MCF 10A (cell line): ENCODE measurements at regions of chr5 and their contacts with region 1.

Region 1: DNA sequence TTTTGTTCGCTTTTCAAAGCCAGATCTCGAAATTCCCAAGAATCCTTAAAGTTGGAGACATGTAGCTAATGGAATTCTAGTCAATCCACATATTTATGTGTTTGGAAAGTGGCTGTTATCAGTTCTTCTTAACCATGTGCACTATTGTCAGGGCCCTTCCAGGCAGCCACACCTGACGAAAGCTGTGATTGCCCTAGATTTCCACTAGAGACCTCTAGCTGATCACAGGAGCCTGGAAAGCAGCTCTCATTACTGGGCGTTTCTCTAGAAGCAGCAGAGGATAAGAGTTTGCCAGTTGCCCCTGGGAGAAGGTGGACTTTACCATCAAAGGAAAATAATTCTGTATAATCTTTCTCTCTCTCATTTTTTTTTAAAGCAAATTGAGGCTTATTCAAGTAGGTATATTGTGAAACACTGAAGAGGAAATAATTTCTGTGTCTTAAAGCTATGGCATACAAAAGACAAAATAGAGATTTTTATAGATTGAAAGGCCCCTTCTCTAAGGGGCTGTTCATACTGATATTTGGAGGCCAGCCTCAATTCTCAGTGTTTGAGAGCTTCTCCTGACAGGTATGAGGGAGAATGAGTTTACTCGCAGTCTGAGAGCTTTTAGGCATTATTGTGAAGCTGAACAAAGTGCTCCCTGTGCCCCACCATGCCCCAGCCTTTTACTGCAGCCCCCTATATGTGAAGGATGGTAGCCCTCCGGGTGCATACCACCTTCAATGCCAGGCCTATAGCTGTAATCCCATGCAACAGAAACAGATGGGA is 405.4 kb upstream of the ACTBL2 start:
- DNase-seq: peak; percentile 76
- H3K4me3 Mint-ChIP-seq: no peak overlapping the region
- H3K27ac Mint-ChIP-seq: no peak overlapping the region
- H3K4me1 Mint-ChIP-seq: peaks cover 19% of the 10 kb centered on the region
- H3K27me3 Mint-ChIP-seq: no peaks in the 10 kb centered on the region
- CTCF ChIP-seq: peak; percentile 71

Region 2: DNA sequence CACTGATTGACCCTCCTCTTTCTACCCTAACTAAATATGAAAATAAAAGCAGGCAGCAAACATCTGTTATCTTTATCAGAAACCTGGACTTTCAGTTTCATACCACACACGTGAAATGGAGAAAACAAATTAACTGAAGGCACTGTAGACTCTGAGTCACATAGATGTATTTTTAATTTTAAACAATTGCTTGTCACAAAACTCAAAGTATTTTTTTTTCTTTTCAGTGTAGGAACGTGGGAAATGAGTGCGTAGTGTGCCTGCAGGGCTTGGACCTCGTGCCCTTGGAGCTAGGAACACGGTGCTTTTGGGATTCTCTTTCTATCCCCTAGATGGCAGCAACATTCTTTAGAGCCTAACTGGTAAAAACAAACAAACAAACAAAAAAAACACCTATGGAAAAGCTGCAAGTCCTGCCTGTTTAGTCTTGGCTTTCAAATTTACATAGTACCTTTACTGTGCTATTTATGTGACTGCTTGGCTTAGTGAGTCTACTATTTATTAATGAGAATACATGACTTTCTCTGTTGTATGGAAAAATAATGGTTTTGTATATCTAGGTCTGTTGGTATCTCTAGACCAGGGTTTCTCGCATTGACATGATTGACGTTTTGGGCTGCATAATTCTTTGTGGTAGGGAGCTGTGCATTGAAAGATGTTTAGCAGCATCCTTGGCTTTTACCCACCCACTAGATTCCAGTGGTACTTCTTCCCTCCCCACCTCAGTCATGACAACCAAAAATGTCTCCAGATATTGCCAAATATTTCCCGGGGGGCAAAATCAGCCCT is 388.6 kb before region 1 on chr5:
- CTCF ChIA-PET with region 1: interaction called, 24 read pairs
- POLR2A ChIA-PET with region 1: interaction called, 5 read pairs
- intact Hi-C with region 1: loop called (anchors 1 kb)
- DNase-seq: peak; percentile 69
- H3K4me3 Mint-ChIP-seq: peak overlapping the region; percentile 53
- H3K27ac Mint-ChIP-seq: no peak overlapping the region
- H3K4me1 Mint-ChIP-seq: peaks cover 21% of the 10 kb centered on the region
- H3K27me3 Mint-ChIP-seq: no peaks in the 10 kb centered on the region
- CTCF ChIP-seq: peak; percentile 63

Region 3: GRCh38 chr5:57841676-57842363 is 46.2 kb before region 1 on chr5:
- CTCF ChIA-PET with region 1: interaction called, 6 read pairs
- POLR2A ChIA-PET with region 1: interaction called, 5 read pairs
- intact Hi-C with region 1: loop called (anchors 1 kb)
- DNase-seq: peak; percentile 82
- H3K4me3 Mint-ChIP-seq: peak overlapping the region; percentile 51
- H3K27ac Mint-ChIP-seq: peak overlapping the region; percentile 47
- H3K4me1 Mint-ChIP-seq: peaks cover 61% of the 10 kb centered on the region
- H3K27me3 Mint-ChIP-seq: no peaks in the 10 kb centered on the region
- CTCF ChIP-seq: no peak

Region 4: GRCh38 chr5:57911438-57911837 is 23.4 kb after region 1 on chr5:
- CTCF ChIA-PET with region 1: no interaction called
- POLR2A ChIA-PET with region 1: no interaction called
- intact Hi-C with region 1: no loop called
- DNase-seq: no peak
- H3K4me3 Mint-ChIP-seq: no peak overlapping the region
- H3K27ac Mint-ChIP-seq: no peak overlapping the region
- H3K4me1 Mint-ChIP-seq: no peaks in the 10 kb centered on the region
- H3K27me3 Mint-ChIP-seq: no peaks in the 10 kb centered on the region
- CTCF ChIP-seq: no peak

Region 5: GRCh38 chr5:58019614-58020013 is 131.6 kb after region 1 on chr5:
- CTCF ChIA-PET with region 1: interaction called, 4 read pairs
- POLR2A ChIA-PET with region 1: interaction called, 5 read pairs
- intact Hi-C with region 1: loop called (anchors 10 kb)
- DNase-seq: no peak
- H3K4me3 Mint-ChIP-seq: no peak overlapping the region
- H3K27ac Mint-ChIP-seq: no peak overlapping the region
- H3K4me1 Mint-ChIP-seq: peaks cover 22% of the 10 kb centered on the region
- H3K27me3 Mint-ChIP-seq: no peaks in the 10 kb centered on the region
- CTCF ChIP-seq: no peak

Region 6: DNA sequence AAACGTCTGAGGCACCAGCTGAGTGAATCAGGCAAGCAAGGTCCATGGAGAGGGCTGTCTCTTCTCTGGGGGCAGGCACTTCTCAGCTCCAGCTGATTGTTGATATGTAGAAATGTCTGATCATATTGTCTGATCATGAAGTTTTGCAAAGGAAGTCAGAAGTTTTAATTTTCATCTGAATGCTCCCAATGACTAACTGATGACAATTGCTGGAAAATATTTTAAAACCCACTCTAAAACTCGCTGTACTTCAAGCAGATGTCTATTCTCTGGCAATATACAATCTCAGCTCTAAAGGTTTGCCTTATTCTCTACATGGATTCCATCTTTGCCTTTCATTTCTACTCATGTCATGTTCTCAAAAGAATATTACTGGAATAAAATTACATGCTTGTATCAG is 559.2 kb after region 1 on chr5:
- CTCF ChIA-PET with region 1: interaction called, 10 read pairs
- POLR2A ChIA-PET with region 1: no interaction called
- intact Hi-C with region 1: no loop called
- DNase-seq: no peak
- H3K4me3 Mint-ChIP-seq: no peak overlapping the region
- H3K27ac Mint-ChIP-seq: no peak overlapping the region
- H3K4me1 Mint-ChIP-seq: peaks cover 15% of the 10 kb centered on the region
- H3K27me3 Mint-ChIP-seq: no peaks in the 10 kb centered on the region
- CTCF ChIP-seq: no peak